ENCODE measurements at regions of chr3 and their contacts with region 1.

Region 1: DNA sequence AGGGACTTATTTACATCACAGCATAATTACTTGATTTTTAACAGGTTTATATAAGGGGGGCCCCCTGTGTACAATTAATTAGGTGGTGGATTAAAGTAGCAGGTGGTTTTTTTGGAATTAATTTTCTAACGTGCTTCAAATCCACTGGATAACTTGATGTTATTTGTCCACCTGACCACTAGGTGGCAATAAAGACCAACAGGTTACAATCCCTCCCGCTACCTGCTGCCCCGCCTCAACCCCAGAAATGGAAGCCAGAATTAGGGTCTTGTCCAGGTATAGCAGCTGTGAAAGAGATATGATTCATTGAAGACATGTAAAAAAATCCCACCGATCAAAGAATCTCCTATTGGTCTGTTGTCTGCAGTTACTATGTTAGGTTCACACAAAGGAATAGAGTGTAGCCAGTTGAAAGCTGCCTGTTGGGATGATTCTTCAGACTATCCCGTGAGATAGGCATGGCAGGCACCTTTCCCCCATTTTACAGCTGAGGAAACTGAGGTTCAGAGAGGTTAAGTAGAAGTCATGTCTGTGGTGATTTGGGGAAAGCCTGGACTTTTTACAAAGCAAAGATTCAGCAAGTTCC is 44.0 kb downstream of the MFSD1 start:
- DNase-seq: peak in 1 of 2 experiments; percentile 15
- H3K4me3 ChIP-seq: no peak overlapping the region
- H3K27ac ChIP-seq: no peak overlapping the region
- H3K4me1 ChIP-seq: no peaks in the 10 kb centered on the region
- H3K27me3 ChIP-seq: no peaks in the 10 kb centered on the region
- CTCF ChIP-seq: peak; percentile 45 to 70 (median 62)
- EP300 ChIP-seq: no peak
- POLR2A ChIP-seq: no peak
- RAD21 ChIP-seq: peak; percentile 90

Region 2: GRCh38 chr3:158801696-158802408 is 44.0 kb before region 1 on chr3 and contains the start of gene MFSD1:
- CTCF ChIA-PET with region 1: interaction called, 13 read pairs
- POLR2A ChIA-PET with region 1: no interaction called
- DNase-seq: peak in 1 of 2 experiments; percentile 89
- H3K4me3 ChIP-seq: peak within 1 kb of the TSS; percentile 48 to 90 (median 82)
- H3K27ac ChIP-seq: no peak within 1 kb of the TSS
- H3K4me1 ChIP-seq: peaks cover 0 to 9% (median 2%) of the 10 kb centered on the region in 4 experiments; a peak in 2 of 7 replicates
- H3K27me3 ChIP-seq: peaks cover 8 to 18% (median 15%) of the 10 kb centered on the region in 4 experiments
- CTCF ChIP-seq: no peak
- EP300 ChIP-seq: peak in 1 of 2 experiments; percentile 17; a peak in 1 of 3 replicates
- POLR2A ChIP-seq: peak in 1 of 2 experiments; percentile 50; a peak in 2 of 3 replicates
- RAD21 ChIP-seq: no peak
- total RNA-seq, gene MFSD1: 9.3 and 11.0 TPM in 2 replicates

Region 3: DNA sequence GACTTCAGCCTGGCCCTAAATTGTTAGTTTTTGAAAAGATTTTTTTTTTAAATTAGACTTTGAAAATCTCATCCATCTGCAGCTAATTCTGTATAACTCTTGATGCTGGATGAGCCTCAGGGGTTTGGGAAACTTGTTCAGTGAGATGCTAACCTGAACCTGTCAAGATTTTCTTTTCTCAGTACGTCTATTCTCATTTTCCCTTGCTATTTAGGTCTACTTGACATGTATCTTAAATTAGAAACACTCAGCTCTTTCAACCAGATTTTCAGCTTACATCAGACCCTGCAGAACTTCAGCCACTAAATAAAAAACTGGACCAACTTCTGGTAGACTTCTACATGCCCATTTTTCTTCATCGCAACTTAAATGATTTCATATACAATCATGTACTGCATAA is 17.4 kb after region 1 on chr3:
- CTCF ChIA-PET with region 1: interaction called, 24 read pairs
- POLR2A ChIA-PET with region 1: no interaction called
- DNase-seq: no peak
- H3K4me3 ChIP-seq: no peak overlapping the region
- H3K27ac ChIP-seq: no peak overlapping the region
- H3K4me1 ChIP-seq: no peaks in the 10 kb centered on the region
- H3K27me3 ChIP-seq: no peaks in the 10 kb centered on the region
- CTCF ChIP-seq: no peak
- EP300 ChIP-seq: no peak
- POLR2A ChIP-seq: no peak
- RAD21 ChIP-seq: no peak

Region 4: DNA sequence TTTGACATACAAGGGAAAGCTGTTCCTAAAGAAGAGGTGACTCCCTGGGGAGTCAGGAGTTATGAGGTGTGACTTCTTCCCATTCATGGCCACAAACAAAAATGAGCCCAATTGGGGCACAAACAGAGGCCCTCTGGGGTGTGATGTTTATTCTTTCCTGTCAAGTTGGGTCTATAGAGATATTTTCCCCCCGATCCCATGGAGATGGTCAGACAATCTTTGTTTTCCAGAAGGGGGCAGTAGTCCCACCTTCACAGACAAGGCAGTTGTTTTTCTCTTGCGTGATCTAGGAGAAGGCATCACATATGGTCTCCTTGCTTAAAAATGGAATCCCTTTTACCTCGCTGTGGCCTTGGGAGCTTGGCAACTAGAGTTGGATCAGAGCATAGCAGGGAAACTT is 66.3 kb after region 1 on chr3:
- CTCF ChIA-PET with region 1: interaction called, 32 read pairs
- POLR2A ChIA-PET with region 1: no interaction called
- DNase-seq: no peak
- H3K4me3 ChIP-seq: no peak overlapping the region
- H3K27ac ChIP-seq: no peak overlapping the region
- H3K4me1 ChIP-seq: no peaks in the 10 kb centered on the region
- H3K27me3 ChIP-seq: no peaks in the 10 kb centered on the region
- CTCF ChIP-seq: peak in 2 of 3 experiments; percentile 45 to 55; a peak in 2 of 4 replicates
- EP300 ChIP-seq: no peak
- POLR2A ChIP-seq: no peak
- RAD21 ChIP-seq: peak; percentile 55 to 67

Region 5: DNA sequence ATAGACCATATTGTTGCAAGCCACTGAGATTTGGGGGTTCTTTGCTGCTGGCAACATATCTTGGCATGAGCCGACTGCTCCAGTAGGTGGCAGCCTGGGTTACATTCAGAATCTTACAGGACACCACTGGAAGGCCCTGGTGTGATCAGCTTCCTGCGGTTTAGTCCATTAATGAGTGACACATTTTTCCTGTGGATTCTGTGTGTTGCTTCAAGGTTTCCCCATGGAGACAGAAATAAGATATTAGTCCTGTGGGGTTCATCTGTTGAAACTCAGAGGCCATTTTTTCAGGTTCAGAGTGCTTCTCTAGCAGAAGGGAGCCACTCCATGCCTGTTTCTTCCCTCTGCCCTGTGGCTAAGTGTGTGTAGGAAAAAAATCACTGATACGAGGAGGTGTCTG is 72.2 kb after region 1 on chr3:
- CTCF ChIA-PET with region 1: interaction called, 32 read pairs
- POLR2A ChIA-PET with region 1: no interaction called
- DNase-seq: peak; percentile 29 to 74
- H3K4me3 ChIP-seq: no peak overlapping the region
- H3K27ac ChIP-seq: no peak overlapping the region
- H3K4me1 ChIP-seq: no peaks in the 10 kb centered on the region
- H3K27me3 ChIP-seq: no peaks in the 10 kb centered on the region
- CTCF ChIP-seq: peak; percentile 76 to 90 (median 78)
- EP300 ChIP-seq: no peak
- POLR2A ChIP-seq: no peak
- RAD21 ChIP-seq: peak; percentile 86 to 90

Region 6: GRCh38 chr3:159252772-159253384 is 407.0 kb after region 1 on chr3:
- CTCF ChIA-PET with region 1: interaction called, 195 read pairs
- POLR2A ChIA-PET with region 1: no interaction called
- DNase-seq: no peak
- H3K4me3 ChIP-seq: no peak overlapping the region
- H3K27ac ChIP-seq: no peak overlapping the region
- H3K4me1 ChIP-seq: no peaks in the 10 kb centered on the region
- H3K27me3 ChIP-seq: no peaks in the 10 kb centered on the region
- CTCF ChIP-seq: peak in 2 of 3 experiments; percentile 73 to 74; a peak in 3 of 4 replicates
- EP300 ChIP-seq: no peak
- POLR2A ChIP-seq: no peak
- RAD21 ChIP-seq: peak; percentile 94

Region 7: GRCh38 chr3:159273608-159274007 is 427.8 kb after region 1 on chr3:
- CTCF ChIA-PET with region 1: no interaction called
- POLR2A ChIA-PET with region 1: no interaction called
- DNase-seq: peak in 1 of 2 experiments; percentile 69
- H3K4me3 ChIP-seq: no peak overlapping the region
- H3K27ac ChIP-seq: no peak overlapping the region
- H3K4me1 ChIP-seq: no peaks in the 10 kb centered on the region
- H3K27me3 ChIP-seq: no peaks in the 10 kb centered on the region
- CTCF ChIP-seq: no peak
- EP300 ChIP-seq: no peak
- POLR2A ChIP-seq: no peak
- RAD21 ChIP-seq: 0 out of 4 replicates have a peak, but pooled peaks of 1 of the 2 experiments have one; percentile 3

Measured in H1 (cell line).